Activated CD4-positive, alpha-beta T cell treated with anti-CD3 and anti-CD28 coated beads for 36 hours (primary cell): ENCODE measurements at regions of chr2 and their contacts with region 1.

Region 1: DNA sequence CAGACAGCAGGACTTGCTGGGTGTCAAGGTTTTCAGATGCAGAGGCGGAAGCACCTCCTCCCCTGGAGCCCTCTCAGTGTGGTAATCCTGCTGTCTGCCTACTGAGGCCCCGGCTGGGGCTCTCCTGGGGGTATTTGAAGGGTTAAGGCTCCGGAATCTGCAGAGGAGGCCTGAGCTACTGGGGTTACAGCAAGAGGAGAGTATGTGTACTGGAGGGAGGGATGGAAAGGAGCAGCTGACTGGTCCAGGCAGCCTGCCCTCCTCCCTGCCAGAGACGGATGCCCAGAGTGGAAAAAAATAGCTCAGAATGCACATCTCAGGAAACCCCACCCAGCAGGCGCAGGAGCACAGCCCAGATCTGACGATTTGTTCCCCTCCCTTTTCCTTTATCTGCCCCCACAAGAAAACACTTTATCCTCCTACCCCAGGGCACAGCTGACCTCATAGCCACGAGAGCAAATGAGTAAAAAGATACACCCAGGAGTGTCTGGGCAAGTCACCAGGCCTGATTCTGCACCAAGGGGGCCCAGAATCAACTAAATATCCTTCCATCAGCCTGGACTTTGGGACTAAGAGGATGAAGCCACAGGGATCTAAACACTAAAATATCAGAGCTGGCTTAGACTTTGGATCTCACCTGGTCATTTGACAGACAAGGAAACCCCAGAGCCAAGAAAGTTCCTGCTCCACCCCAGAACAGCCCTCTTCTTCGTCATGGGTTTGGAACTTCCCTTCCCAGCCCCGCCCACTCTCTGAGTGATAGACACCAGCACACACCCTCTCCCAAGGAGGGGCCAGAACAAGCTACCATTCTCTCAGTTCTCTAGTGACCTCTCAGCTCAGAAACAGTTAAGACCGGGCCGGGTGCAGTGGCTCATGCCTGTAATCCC is 5.5 kb downstream of the TMBIM1 start:
- DNase-seq: peak; percentile 91
- ATAC-seq: peak; percentile 74
- H3K4me3 Mint-ChIP-seq: peak overlapping the region; percentile 80
- H3K27ac Mint-ChIP-seq: peak overlapping the region; percentile 99
- H3K4me1 Mint-ChIP-seq: peaks cover 88% of the 10 kb centered on the region
- H3K27me3 Mint-ChIP-seq: no peaks in the 10 kb centered on the region

Region 2: GRCh38 chr2:217988014-217988839 is 298.6 kb before region 1 on chr2:
- CTCF ChIA-PET with region 1: no interaction called
- POLR2A ChIA-PET with region 1: no interaction called
- intact Hi-C with region 1: no loop called
- DNase-seq: peak; percentile 87
- ATAC-seq: peak; percentile 68
- H3K4me3 Mint-ChIP-seq: no peak overlapping the region
- H3K27ac Mint-ChIP-seq: no peak overlapping the region
- H3K4me1 Mint-ChIP-seq: peaks cover 5% of the 10 kb centered on the region
- H3K27me3 Mint-ChIP-seq: peaks cover 4% of the 10 kb centered on the region

Region 3: GRCh38 chr2:218216674-218217359 is 70.0 kb before region 1 on chr2 and contains the start of gene ARPC2:
- CTCF ChIA-PET with region 1: no interaction called
- POLR2A ChIA-PET with region 1: interaction called, 13 read pairs
- intact Hi-C with region 1: loop called in 1 of 2 experiments (anchors 1 kb)
- DNase-seq: peak; percentile 96
- ATAC-seq: peak; percentile 64
- H3K4me3 Mint-ChIP-seq: peak within 1 kb of the TSS; percentile 81
- H3K27ac Mint-ChIP-seq: peak within 1 kb of the TSS; percentile 96
- H3K4me1 Mint-ChIP-seq: peaks cover 34% of the 10 kb centered on the region
- H3K27me3 Mint-ChIP-seq: no peaks in the 10 kb centered on the region
- total RNA-seq, gene ARPC2: 563 to 632 TPM

Region 4: GRCh38 chr2:218329826-218330593 is 43.2 kb after region 1 on chr2:
- CTCF ChIA-PET with region 1: no interaction called
- POLR2A ChIA-PET with region 1: no interaction called
- intact Hi-C with region 1: no loop called
- DNase-seq: no peak
- ATAC-seq: no peak
- H3K4me3 Mint-ChIP-seq: no peak overlapping the region
- H3K27ac Mint-ChIP-seq: no peak overlapping the region
- H3K4me1 Mint-ChIP-seq: peaks cover 18% of the 10 kb centered on the region
- H3K27me3 Mint-ChIP-seq: no peaks in the 10 kb centered on the region

Region 5: DNA sequence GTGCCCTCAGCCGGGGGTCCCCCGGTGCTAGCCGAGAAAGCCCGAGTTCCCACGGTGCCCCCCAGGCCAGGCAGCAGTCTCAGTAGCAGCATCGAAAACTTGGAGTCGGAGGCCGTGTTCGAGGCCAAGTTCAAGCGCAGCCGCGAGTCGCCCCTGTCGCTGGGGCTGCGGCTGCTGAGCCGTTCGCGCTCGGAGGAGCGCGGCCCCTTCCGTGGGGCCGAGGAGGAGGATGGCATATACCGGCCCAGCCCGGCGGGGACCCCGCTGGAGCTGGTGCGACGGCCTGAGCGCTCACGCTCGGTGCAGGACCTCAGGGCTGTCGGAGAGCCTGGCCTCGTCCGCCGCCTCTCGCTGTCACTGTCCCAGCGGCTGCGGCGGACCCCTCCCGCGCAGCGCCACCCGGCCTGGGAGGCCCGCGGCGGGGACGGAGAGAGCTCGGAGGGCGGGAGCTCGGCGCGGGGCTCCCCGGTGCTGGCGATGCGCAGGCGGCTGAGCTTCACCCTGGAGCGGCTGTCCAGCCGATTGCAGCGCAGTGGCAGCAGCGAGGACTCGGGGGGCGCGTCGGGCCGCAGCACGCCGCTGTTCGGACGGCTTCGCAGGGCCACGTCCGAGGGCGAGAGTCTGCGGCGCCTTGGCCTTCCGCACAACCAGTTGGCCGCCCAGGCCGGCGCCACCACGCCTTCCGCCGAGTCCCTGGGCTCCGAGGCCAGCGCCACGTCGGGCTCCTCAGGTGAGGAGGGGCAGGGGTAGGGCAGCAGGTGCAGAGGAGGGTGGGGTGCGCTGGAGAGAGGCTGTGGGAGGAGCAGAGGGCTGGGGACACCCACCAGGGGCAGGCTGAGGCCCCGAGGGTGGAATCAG is 1197.8 kb after region 1 on chr2:
- CTCF ChIA-PET with region 1: no interaction called
- POLR2A ChIA-PET with region 1: no interaction called
- intact Hi-C with region 1: no loop called
- DNase-seq: peak; percentile 27
- ATAC-seq: peak; percentile 51
- H3K4me3 Mint-ChIP-seq: peak overlapping the region; percentile 15
- H3K27ac Mint-ChIP-seq: no peak overlapping the region
- H3K4me1 Mint-ChIP-seq: peaks cover 6% of the 10 kb centered on the region
- H3K27me3 Mint-ChIP-seq: peaks cover 27% of the 10 kb centered on the region